MCF 10A (cell line): ENCODE measurements at regions of chr3 and their contacts with region 1.

Region 1: GRCh38 chr3:98483130-98483482 is 14.4 kb upstream of the OR5K2 start:
- DNase-seq: peak; percentile 35
- H3K4me3 Mint-ChIP-seq: no peak overlapping the region
- H3K27ac Mint-ChIP-seq: peak overlapping the region; percentile 97
- H3K4me1 Mint-ChIP-seq: peaks cover 18% of the 10 kb centered on the region
- H3K27me3 Mint-ChIP-seq: no peaks in the 10 kb centered on the region
- CTCF ChIP-seq: no peak

Region 2: DNA sequence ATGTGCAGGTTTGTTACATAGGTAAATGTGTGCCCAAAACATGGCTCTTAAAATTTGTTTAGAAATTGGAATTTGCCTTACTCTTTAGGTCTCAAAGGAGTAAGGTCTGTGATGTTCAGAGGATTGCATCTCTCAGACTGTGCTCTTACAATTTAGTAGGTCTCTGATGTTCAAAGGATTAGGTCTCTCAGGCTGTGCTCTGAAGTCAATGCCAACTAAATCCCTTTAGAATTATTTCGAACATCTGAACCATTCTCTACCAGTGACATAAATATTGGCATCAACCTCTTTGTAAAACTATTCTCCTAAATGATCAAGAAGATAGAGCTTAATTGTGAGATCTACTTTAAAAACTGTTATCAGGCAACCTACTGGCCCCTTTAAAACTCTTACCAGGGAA is 20.2 kb before region 1 on chr3 and contains the start of gene OR5K1:
- CTCF ChIA-PET with region 1: no interaction called
- POLR2A ChIA-PET with region 1: no interaction called
- intact Hi-C with region 1: no loop called
- DNase-seq: no peak
- H3K4me3 Mint-ChIP-seq: no peak within 1 kb of the TSS
- H3K27ac Mint-ChIP-seq: no peak within 1 kb of the TSS
- H3K4me1 Mint-ChIP-seq: no peaks in the 10 kb centered on the region
- H3K27me3 Mint-ChIP-seq: no peaks in the 10 kb centered on the region
- CTCF ChIP-seq: no peak
- total RNA-seq, gene OR5K1: not detected in 2 replicates

Region 3: GRCh38 chr3:98513091-98513511 is 30.0 kb after region 1 on chr3:
- CTCF ChIA-PET with region 1: interaction called, 6 read pairs
- POLR2A ChIA-PET with region 1: interaction called, 17 read pairs
- intact Hi-C with region 1: loop called (anchors 2 kb)
- DNase-seq: peak; percentile 96
- H3K4me3 Mint-ChIP-seq: peak overlapping the region; percentile 56
- H3K27ac Mint-ChIP-seq: peak overlapping the region; percentile 76
- H3K4me1 Mint-ChIP-seq: peaks cover 25% of the 10 kb centered on the region
- H3K27me3 Mint-ChIP-seq: no peaks in the 10 kb centered on the region
- CTCF ChIP-seq: no peak